Heart left ventricle (tissue), 16 donors: ENCODE measurements at regions of chr11 and their contacts with region 1.

Region 1: DNA sequence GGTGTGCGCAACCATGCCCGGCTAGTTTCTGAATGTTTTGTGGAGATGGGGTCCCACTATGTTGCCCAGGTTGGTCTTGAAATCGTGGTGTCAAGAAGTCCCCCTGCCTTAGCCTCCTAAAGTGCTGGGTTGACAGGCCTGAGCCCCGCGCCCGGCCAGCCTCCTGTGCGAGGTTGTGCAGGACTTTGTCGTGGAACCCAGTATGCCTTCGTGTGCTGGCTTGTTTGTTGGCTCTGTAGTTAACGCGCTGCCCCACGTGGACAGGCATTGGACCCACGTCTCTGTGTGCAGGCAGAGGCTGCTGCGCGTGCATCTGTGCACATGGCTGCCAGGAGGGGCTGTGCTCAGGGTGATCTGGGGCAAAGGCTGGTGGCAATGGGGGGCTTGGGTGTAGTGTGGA is 33.9 kb upstream of the ZNF195 start:
- DNase-seq: no peak
- ATAC-seq: no peak
- H3K4me3 ChIP-seq: no peak overlapping the region
- H3K27ac ChIP-seq: no peak overlapping the region
- H3K4me1 ChIP-seq: no peaks in the 10 kb centered on the region
- H3K27me3 ChIP-seq: no peaks in the 10 kb centered on the region
- CTCF ChIP-seq: no peak
- POLR2A ChIP-seq: no peak

Region 2: DNA sequence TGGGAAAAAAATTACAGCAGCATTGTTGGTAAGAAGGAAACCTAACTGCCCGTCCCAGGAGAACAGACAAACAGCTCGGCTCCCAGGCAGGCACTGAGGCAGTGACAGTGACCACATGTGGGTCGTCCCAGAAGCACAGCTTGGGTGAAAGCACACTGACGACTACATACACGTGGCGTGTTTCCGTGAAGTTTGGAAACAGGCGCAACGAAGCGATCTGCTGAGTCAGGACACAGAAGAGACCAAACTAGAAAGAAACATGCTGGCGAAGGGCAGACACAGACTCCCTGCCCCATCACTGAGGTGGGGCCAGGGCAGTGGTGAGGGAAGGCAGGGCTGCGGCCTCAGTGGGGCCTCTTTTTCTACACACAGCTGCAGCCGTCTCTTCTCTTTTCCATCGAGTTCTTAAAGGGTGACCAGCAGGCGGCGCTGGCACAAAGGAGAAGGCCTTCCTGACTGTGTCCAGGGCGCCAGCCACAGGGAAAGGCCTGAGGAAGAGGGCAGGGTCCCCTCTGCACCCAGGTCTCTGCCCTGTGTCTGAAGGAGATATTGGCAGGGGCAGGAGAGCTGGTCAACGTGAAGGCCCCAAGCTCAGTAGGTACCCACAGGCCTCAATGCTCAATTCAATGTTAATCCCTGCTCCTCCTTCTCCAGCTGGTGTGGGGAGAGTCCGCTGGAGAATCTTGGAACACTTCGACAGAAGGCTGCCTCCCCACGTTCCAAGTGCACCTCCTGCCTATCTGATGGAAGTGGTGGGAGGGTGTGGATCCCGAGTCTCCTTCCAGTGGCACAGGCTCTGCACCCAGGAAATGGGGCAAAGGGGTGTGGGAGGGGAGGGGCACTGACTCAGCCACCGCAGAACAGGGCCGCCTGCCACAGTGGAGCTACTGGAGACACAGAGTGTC is 375.5 kb before region 1 on chr11:
- intact Hi-C with region 1: loop called in 1 of 10 experiments (anchors 10 kb)
- DNase-seq: peak; percentile 79 to 90 (median 81)
- ATAC-seq: peak; percentile 59 to 79 (median 76)
- H3K4me3 ChIP-seq: no peak overlapping the region
- H3K27ac ChIP-seq: peak overlapping the region in 4 of 12 donors; percentile 18 to 58 (median 43)
- H3K4me1 ChIP-seq: peaks cover 0 to 32% (median 9%) of the 10 kb centered on the region in 12 donors
- H3K27me3 ChIP-seq: no peaks in the 10 kb centered on the region
- CTCF ChIP-seq: peak; percentile 72 to 91 (median 81)
- POLR2A ChIP-seq: no peak

Region 3: DNA sequence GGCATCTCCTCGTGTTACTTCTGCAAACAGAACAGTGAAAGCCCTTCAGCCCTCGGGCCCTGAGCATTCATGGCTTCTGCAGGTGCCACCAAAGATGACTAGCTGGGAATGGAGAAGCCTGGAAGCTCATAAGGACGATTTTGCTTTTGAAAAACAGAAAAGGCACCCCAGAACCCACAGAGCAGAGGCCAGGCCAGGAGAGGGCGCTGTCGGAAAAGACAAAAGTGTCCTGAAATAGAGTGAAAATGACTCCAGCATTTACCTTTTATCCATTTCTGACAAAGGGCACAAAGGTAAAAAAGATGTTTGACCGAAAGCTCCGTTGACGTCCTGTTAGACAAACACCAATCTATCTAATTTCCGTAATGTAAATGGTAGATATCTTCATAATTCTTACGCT is 71.5 kb before region 1 on chr11:
- intact Hi-C with region 1: loop called in 4 of 10 experiments (anchors 10 kb)
- DNase-seq: peak in 1 of 5 donors; percentile 67
- ATAC-seq: no peak
- H3K4me3 ChIP-seq: no peak overlapping the region
- H3K27ac ChIP-seq: no peak overlapping the region
- H3K4me1 ChIP-seq: no peaks in the 10 kb centered on the region
- H3K27me3 ChIP-seq: peaks cover 0 to 28% (median 4%) of the 10 kb centered on the region in 9 donors
- CTCF ChIP-seq: peak; percentile 34 to 69 (median 58)
- POLR2A ChIP-seq: no peak

Region 4: GRCh38 chr11:3359092-3359824 is 53.6 kb before region 1 on chr11:
- intact Hi-C with region 1: no loop called
- DNase-seq: no peak
- ATAC-seq: no peak
- H3K4me3 ChIP-seq: no peak overlapping the region
- H3K27ac ChIP-seq: no peak overlapping the region
- H3K4me1 ChIP-seq: no peaks in the 10 kb centered on the region
- H3K27me3 ChIP-seq: no peaks in the 10 kb centered on the region
- CTCF ChIP-seq: no peak
- POLR2A ChIP-seq: no peak

Region 5: GRCh38 chr11:3370311-3370870 is 42.4 kb before region 1 on chr11:
- intact Hi-C with region 1: loop called in 1 of 10 experiments (anchors 5 kb)
- DNase-seq: no peak
- ATAC-seq: no peak
- H3K4me3 ChIP-seq: no peak overlapping the region
- H3K27ac ChIP-seq: no peak overlapping the region
- H3K4me1 ChIP-seq: peaks cover 0 to 6% (median 0%) of the 10 kb centered on the region in 12 donors
- H3K27me3 ChIP-seq: no peaks in the 10 kb centered on the region
- CTCF ChIP-seq: no peak
- POLR2A ChIP-seq: no peak